Right lobe of liver (tissue), 6 donors: ENCODE measurements at regions of chr4 and their contacts with region 1.

Region 1: GRCh38 chr4:29405116-29405515 is 1315.1 kb upstream of the PCDH7 start:
- DNase-seq: no peak
- ATAC-seq: no peak
- H3K4me3 ChIP-seq: no peak overlapping the region
- H3K27ac ChIP-seq: no peak overlapping the region
- H3K4me1 ChIP-seq: no peaks in the 10 kb centered on the region
- H3K27me3 ChIP-seq: no peaks in the 10 kb centered on the region
- CTCF ChIP-seq: no peak
- POLR2A ChIP-seq: no peak

Region 2: DNA sequence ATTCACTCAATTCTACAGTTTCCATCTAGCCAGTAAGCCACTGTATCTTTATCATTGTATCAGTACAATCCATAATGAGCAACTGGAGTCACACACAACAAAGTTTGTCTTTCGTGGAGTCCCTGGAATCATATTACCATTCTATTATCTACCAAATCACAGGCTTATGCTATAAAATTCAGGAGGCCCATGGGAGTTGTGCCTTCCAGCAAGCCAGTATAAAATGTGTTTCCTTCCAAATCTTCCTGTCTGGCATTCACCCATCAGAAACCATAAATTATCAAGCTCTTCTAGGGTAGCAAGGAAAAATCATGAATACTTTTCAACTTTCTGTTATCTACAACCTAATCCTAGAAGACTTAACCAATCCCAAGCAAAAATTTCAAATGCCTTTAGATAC is 68.3 kb before region 1 on chr4:
- intact Hi-C with region 1: loop called in 1 of 2 experiments (anchors 10 kb)
- DNase-seq: no peak
- ATAC-seq: no peak
- H3K4me3 ChIP-seq: no peak overlapping the region
- H3K27ac ChIP-seq: no peak overlapping the region
- H3K4me1 ChIP-seq: no peaks in the 10 kb centered on the region
- H3K27me3 ChIP-seq: no peaks in the 10 kb centered on the region
- CTCF ChIP-seq: no peak
- POLR2A ChIP-seq: no peak